Head of caudate nucleus (tissue), 42 donors: ENCODE measurements at regions of chr20 and their contacts with region 1.

Region 1: GRCh38 chr20:48620519-48621254 is 207.1 kb downstream of the PREX1 start:
- DNase-seq: peak; percentile 59 to 94 (median 86)

Region 2: DNA sequence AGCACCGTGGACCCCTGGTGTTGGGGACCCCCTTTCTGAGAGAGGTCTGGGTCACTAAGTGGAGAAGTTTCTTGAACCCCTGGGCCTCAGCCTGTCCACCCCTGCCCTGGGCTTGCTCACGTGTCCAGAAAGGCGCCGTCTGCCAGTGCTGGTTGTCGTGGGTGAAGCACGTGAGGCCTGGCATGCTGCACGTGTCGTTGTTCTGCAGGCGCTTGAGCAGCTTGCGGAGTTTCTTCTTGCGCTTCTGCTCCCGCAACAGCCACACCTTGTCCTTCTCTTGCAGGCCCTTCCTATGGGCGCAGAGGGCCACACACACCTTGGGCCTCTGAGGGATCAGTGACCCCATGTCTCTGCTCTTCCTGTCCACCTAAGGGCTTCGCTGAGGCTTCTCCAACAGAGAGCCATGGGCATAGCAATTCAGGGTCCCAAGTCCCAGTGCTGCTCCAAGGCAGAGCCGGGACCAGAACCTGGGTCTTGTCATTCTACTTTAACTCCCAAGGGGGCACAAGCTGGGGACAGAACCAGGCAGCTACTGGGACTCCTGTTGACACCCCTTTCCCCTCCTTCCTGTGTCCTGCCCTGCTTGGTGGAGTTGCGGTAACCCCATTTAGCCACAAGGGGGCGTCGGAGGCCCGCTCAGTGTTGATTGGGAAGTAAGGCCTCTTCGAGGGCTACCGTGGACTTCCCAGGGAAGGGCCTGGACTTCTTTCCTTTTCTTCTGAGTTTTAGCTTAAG is 957.2 kb before region 1 on chr20:
- intact Hi-C with region 1: loop called (anchors 5 kb)
- DNase-seq: peak; percentile 37 to 92 (median 82)

Region 3: GRCh38 chr20:47725248-47725973 is 895.3 kb before region 1 on chr20:
- intact Hi-C with region 1: loop called (anchors 5 kb)
- DNase-seq: peak; percentile 27 to 86 (median 67)

Region 4: GRCh38 chr20:47785854-47786764 is 834.6 kb before region 1 on chr20:
- intact Hi-C with region 1: loop called (anchors 2 kb)
- DNase-seq: peak; percentile 39 to 90 (median 70)